Colonic mucosa (tissue), 4 donors: ENCODE measurements at regions of chr19 and their contacts with region 1.

Region 1: GRCh38 chr19:41563854-41564514 is 12.0 kb upstream of the CEACAM21 start:
- DNase-seq: no peak
- H3K4me3 ChIP-seq: no peak overlapping the region
- H3K27ac ChIP-seq: no peak overlapping the region
- H3K4me1 ChIP-seq: no peaks in the 10 kb centered on the region
- H3K27me3 ChIP-seq: peaks cover 30% of the 10 kb centered on the region
- CTCF ChIP-seq: no peak

Region 2: GRCh38 chr19:41341669-41342490 is 222.1 kb before region 1 on chr19:
- intact Hi-C with region 1: loop called (anchors 10 kb)
- DNase-seq: peak; percentile 32
- H3K4me3 ChIP-seq: no peak overlapping the region
- H3K27ac ChIP-seq: no peak overlapping the region
- H3K4me1 ChIP-seq: no peaks in the 10 kb centered on the region
- H3K27me3 ChIP-seq: no peaks in the 10 kb centered on the region
- CTCF ChIP-seq: peak; percentile 21

Region 3: GRCh38 chr19:41409288-41409687 is 154.7 kb before region 1 on chr19:
- intact Hi-C with region 1: no loop called
- DNase-seq: peak; percentile 55
- H3K4me3 ChIP-seq: no peak overlapping the region
- H3K27ac ChIP-seq: peak overlapping the region; percentile 25
- H3K4me1 ChIP-seq: no peaks in the 10 kb centered on the region
- H3K27me3 ChIP-seq: no peaks in the 10 kb centered on the region
- CTCF ChIP-seq: no peak

Region 4: DNA sequence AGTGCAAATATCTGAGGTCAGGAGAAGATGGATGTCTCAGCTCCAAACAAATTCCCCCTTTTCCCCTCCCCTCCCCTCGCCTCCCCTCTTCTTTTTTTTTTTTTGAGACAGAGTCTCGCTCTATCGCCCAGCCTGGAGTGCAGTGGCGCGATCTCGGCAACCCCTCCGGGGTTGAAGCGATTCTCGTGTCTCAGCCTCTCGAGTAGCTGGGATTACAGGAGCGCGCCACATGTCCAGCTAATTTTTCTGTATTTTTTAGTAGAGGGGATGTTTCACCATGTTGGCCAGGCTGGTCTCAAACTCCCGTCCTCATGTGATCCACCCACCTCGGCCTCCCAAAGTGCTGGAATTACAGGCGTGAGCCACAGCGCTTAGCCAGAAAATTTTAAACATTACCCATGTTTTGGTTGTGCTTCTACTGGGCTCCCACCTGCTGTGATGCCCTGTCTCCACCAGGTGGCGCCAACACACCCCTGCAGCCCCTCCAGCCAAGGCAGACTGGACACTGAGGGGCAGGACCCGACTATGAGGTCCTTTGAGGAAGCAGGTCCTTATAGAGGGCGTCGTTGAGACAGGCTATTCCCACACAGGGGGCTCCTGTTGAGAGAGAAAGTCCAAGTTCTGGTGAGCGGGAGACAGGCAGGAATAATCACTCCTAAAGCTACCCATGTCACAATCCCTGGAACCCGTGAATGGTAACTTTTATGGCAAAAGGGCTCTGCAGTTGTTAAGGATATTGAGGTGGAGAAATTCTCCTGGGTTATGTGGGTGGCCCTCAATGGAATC is 114.7 kb before region 1 on chr19:
- intact Hi-C with region 1: loop called (anchors 2 kb)
- DNase-seq: peak; percentile 69
- H3K4me3 ChIP-seq: no peak overlapping the region
- H3K27ac ChIP-seq: no peak overlapping the region
- H3K4me1 ChIP-seq: no peaks in the 10 kb centered on the region
- H3K27me3 ChIP-seq: no peaks in the 10 kb centered on the region
- CTCF ChIP-seq: peak; percentile 96

Region 5: GRCh38 chr19:41521931-41522555 is 41.9 kb before region 1 on chr19:
- intact Hi-C with region 1: no loop called
- DNase-seq: no peak
- H3K4me3 ChIP-seq: peak overlapping the region; percentile 18
- H3K27ac ChIP-seq: peak overlapping the region; percentile 24
- H3K4me1 ChIP-seq: no peaks in the 10 kb centered on the region
- H3K27me3 ChIP-seq: peaks cover 22% of the 10 kb centered on the region
- CTCF ChIP-seq: no peak